ENCODE measurements at regions of chr10 and their contacts with region 1.

Region 1: GRCh38 chr10:42552493-42553407 is 85.6 kb downstream of the ZNF33B start:
- DNase-seq: peak; percentile 97
- ATAC-seq: peak; percentile 97
- H3K4me3 Mint-ChIP-seq: peak overlapping the region; percentile 94
- H3K27ac Mint-ChIP-seq: peak overlapping the region; percentile 94
- H3K4me1 Mint-ChIP-seq: peaks cover 33% of the 10 kb centered on the region
- H3K27me3 Mint-ChIP-seq: no peaks in the 10 kb centered on the region

Region 2: GRCh38 chr10:42623929-42624328 is 71.2 kb after region 1 on chr10:
- CTCF ChIA-PET with region 1: no interaction called
- POLR2A ChIA-PET with region 1: no interaction called
- intact Hi-C with region 1: no loop called
- DNase-seq: no peak
- ATAC-seq: no peak
- H3K4me3 Mint-ChIP-seq: no peak overlapping the region
- H3K27ac Mint-ChIP-seq: no peak overlapping the region
- H3K4me1 Mint-ChIP-seq: peaks cover 12% of the 10 kb centered on the region
- H3K27me3 Mint-ChIP-seq: no peaks in the 10 kb centered on the region

Region 3: GRCh38 chr10:42638055-42638820 is 85.5 kb after region 1 on chr10 and contains the start of gene ZNF33B:
- CTCF ChIA-PET with region 1: no interaction called
- POLR2A ChIA-PET with region 1: no interaction called
- intact Hi-C with region 1: loop called (anchors 1 kb)
- DNase-seq: peak; percentile 97
- ATAC-seq: peak; percentile 95
- H3K4me3 Mint-ChIP-seq: peak within 1 kb of the TSS; percentile 88
- H3K27ac Mint-ChIP-seq: peak within 1 kb of the TSS; percentile 97
- H3K4me1 Mint-ChIP-seq: peaks cover 25% of the 10 kb centered on the region
- H3K27me3 Mint-ChIP-seq: no peaks in the 10 kb centered on the region
- total RNA-seq, gene ZNF33B: 7.4 to 10.5 TPM

Region 4: DNA sequence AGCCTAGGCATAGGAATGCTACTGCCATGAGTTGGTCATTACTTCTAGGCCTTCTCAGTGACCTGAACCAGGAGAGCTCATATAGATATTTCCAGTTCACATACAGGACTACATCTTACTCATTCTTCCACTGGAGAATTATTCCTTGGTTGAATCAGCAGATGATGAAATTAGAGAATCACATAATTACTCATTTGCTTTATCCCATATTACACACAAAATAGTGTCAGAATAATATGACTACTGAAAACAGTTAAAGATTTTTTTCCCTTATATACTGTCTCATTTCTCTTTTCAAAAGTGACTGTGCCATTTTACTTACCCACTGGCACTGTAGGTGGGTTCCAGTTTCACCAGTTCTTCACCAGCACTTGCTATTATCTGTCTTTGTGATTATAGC is 248.4 kb after region 1 on chr10:
- CTCF ChIA-PET with region 1: no interaction called
- POLR2A ChIA-PET with region 1: no interaction called
- intact Hi-C with region 1: loop called in 1 of 2 experiments (anchors 5 kb)
- DNase-seq: peak; percentile 24
- ATAC-seq: peak; percentile 94
- H3K4me3 Mint-ChIP-seq: no peak overlapping the region
- H3K27ac Mint-ChIP-seq: peak overlapping the region; percentile 89
- H3K4me1 Mint-ChIP-seq: peaks cover 31% of the 10 kb centered on the region
- H3K27me3 Mint-ChIP-seq: no peaks in the 10 kb centered on the region

Region 5: DNA sequence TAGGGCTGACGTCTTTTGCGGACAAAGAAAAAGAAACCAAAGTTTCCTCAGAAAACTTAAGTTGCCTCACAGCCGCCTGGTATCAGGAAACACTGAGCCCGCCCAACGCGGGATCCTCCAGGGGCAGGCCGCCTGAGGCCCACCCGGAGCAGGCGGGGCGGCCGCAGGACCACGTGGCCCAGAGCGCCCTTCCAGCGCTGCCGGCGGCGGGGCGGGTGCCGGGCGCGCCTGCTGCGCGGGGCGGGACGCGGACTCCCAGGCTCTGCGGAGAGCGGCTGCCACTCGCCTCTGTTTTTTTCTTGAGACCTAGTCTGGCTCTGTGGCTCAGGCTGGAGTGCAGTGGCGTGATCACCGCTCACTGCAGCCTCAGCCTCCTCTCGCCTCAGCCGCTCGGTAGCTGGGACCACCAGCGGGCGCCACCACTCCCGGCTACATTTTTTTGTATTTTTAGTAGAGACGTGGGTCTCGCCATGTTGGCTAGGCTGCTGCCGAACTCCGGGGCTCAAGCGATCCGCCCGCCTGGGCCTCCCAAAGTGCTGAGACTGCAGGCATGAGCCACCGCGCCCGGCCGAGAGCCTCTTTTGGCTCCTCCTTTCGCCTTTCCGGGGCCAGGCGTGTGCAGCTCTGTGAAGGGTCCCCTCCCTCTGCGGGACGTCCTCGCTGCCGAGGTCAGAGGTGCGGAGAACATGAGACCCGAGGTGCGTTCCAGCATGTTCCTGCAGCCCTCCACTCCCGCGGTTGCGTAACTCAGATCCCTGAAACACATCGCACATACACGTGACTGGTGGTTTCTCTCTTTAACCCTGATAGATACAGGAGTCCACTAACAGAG is 867.8 kb after region 1 on chr10:
- CTCF ChIA-PET with region 1: no interaction called
- POLR2A ChIA-PET with region 1: no interaction called
- intact Hi-C with region 1: loop called in 1 of 2 experiments (anchors 1 kb)
- DNase-seq: peak; percentile 89
- ATAC-seq: peak; percentile 83
- H3K4me3 Mint-ChIP-seq: peak overlapping the region; percentile 79
- H3K27ac Mint-ChIP-seq: peak overlapping the region; percentile 99
- H3K4me1 Mint-ChIP-seq: peaks cover 37% of the 10 kb centered on the region
- H3K27me3 Mint-ChIP-seq: no peaks in the 10 kb centered on the region

Region 6: GRCh38 chr10:43648398-43649184 is 1095.8 kb after region 1 on chr10 and contains the start of gene ZNF32:
- CTCF ChIA-PET with region 1: no interaction called
- POLR2A ChIA-PET with region 1: no interaction called
- intact Hi-C with region 1: loop called in 1 of 2 experiments (anchors 1 kb)
- DNase-seq: peak; percentile 91
- ATAC-seq: peak; percentile 97
- H3K4me3 Mint-ChIP-seq: peak within 1 kb of the TSS; percentile 79
- H3K27ac Mint-ChIP-seq: peak within 1 kb of the TSS; percentile 88
- H3K4me1 Mint-ChIP-seq: peaks cover 14% of the 10 kb centered on the region
- H3K27me3 Mint-ChIP-seq: peaks cover 3% of the 10 kb centered on the region
- total RNA-seq, gene ZNF32: 14.1 to 15.2 TPM